CD8-positive, alpha-beta T cell (primary cell): ENCODE measurements at regions of chr2 and their contacts with region 1.

Region 1: GRCh38 chr2:113700186-113700841 is 56.1 kb downstream of the SLC35F5 start:
- DNase-seq: peak in 8 of 9 experiments; percentile 8 to 77 (median 30)
- ATAC-seq: peak; percentile 91
- H3K4me3 ChIP-seq: no peak overlapping the region
- H3K4me3 Mint-ChIP-seq: peak overlapping the region; percentile 58
- H3K27ac ChIP-seq: no peak overlapping the region
- H3K27ac Mint-ChIP-seq: peak overlapping the region; percentile 83
- H3K4me1 ChIP-seq: peaks cover 8% of the 10 kb centered on the region
- H3K4me1 Mint-ChIP-seq: peaks cover 20% of the 10 kb centered on the region
- H3K27me3 ChIP-seq: no peaks in the 10 kb centered on the region
- H3K27me3 Mint-ChIP-seq: no peaks in the 10 kb centered on the region
- CTCF ChIP-seq: peak; percentile 49

Region 2: DNA sequence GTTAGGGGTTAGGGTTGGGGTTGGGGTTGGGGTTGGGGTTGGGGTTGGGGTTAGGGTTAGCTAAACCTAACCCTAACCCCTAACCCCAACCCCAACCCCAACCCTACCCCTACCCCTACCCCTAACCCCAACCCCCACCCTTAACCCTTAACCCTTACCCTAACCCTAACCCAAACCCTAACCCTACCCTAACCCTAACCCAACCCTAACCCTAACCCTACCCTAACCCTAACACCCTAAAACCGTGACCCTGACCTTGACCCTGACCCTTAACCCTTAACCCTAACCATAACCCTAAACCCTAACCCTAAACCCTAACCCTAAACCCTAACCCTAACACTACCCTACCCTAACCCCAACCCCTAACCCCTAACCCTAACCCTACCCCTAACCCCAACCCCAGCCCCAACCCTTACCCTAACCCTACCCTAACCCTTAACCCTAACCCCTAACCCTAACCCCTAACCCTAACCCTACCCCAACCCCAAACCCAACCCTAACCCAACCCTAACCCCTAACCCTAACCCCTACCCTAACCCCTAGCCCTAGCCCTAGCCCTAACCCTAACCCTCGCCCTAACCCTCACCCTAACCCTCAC is 97.3 kb before region 1 on chr2:
- CTCF ChIA-PET with region 1: interaction called, 17 read pairs
- POLR2A ChIA-PET with region 1: no interaction called
- intact Hi-C with region 1: no loop called
- DNase-seq: peak in 2 of 9 experiments; percentile 13 to 33
- ATAC-seq: no peak
- H3K4me3 ChIP-seq: peak overlapping the region; percentile 52 to 55
- H3K4me3 Mint-ChIP-seq: peak overlapping the region; percentile 96
- H3K27ac ChIP-seq: peak overlapping the region; percentile 55 to 84
- H3K27ac Mint-ChIP-seq: peak overlapping the region; percentile 96
- H3K4me1 ChIP-seq: peaks cover 5% of the 10 kb centered on the region
- H3K4me1 Mint-ChIP-seq: peaks cover 7% of the 10 kb centered on the region
- H3K27me3 ChIP-seq: no peaks in the 10 kb centered on the region
- H3K27me3 Mint-ChIP-seq: no peaks in the 10 kb centered on the region
- CTCF ChIP-seq: no peak